ENCODE measurements at regions of chr11 and their contacts with region 1.

Region 1: DNA sequence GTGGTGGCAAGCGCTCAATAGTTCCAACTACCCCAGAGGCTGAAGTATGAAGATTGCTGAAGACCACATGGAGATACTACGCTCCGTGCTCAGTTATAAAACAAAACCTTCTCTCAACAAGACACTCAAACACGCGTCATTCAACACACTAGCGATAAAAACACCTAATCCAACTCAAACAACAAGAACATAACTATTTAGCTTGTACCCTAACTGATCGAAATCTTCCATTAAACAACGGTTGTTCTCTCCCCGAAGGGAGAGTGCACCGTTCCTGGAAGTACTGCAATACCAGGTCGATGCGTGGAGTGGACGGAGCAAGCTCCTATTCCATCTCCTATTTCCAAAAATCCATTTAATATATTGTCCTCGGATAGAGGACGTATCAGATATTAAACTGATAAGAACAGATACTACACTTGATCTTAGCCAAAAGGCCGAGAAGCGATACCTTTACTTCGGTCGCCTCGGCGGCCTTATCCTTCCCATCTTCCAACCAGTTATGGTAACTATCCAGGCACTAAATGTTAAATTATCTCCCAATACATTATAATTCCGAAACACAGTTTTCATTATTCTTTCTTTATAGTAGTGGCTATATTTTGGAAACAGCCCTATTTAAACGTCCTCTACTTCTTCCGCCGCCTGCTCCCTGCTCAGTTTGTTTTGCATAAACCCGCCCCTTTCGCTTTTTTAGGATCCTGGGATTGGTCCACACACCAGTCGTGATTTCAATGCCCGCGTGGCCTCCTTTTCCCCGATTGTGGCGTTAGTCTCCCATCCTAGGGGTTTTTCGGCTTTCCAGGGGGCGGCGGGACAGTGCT is 2.2 kb upstream of the WDR74 start:
- DNase-seq: peak; percentile 99
- ATAC-seq: peak; percentile 79
- H3K4me3 ChIP-seq: peak overlapping the region in 1 of 2 experiments; percentile 15; a peak in 2 of 4 replicates
- H3K27ac ChIP-seq: peak overlapping the region; percentile 94
- H3K4me1 ChIP-seq: peaks cover 8 to 36% of the 10 kb centered on the region in 2 experiments; a peak in 3 of 4 replicates
- H3K27me3 ChIP-seq: no peaks in the 10 kb centered on the region
- CTCF ChIP-seq: no peak
- POLR2A ChIP-seq: peak; percentile 100
- RAD21 ChIP-seq: no peak

Region 2: DNA sequence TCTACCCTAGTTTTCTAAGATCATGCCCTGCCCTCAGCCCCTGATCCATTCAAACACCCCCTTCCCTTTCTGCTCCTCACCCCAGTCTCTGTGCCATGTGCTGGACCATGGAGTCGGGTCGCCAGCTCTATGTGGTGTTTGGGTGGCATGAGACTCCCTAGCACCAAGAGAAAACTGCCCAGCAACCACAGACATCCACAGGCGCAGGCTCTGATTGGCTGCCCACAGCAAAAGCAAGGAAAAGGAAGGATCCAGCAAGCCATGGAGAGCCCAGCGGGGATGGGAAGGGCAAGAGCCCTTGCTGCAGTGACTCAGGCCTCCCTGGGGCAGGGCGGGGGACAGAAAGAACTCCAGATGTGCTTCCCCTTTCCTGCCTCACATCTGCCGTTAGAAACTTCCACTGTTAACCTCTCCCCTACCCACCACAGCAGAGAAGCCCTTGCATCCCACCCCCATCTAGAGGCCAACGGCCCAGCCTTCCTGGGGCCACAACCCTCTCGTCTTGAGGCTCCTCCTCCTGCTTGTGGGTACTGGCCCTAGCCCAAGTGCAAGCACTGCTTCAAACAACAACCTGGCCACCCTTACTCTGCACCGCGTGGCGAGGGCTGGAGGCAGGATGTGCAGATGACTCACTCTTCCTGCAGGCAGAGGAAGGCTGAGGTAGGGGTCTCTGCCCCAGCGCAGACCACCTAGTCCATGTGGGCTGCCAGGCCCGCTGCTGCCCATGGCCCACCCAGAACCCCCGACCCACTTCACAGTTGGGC is 285.3 kb before region 1 on chr11:
- CTCF ChIA-PET with region 1: no interaction called
- POLR2A ChIA-PET with region 1: interaction called, 6 read pairs
- RAD21 ChIA-PET with region 1: no interaction called
- intact Hi-C with region 1: loop called (anchors 5 kb)
- DNase-seq: peak; percentile 93
- ATAC-seq: peak; percentile 60
- H3K4me3 ChIP-seq: peak overlapping the region; percentile 33 to 36
- H3K27ac ChIP-seq: peak overlapping the region; percentile 99
- H3K4me1 ChIP-seq: peaks cover 90 to 100% of the 10 kb centered on the region in 2 experiments
- H3K27me3 ChIP-seq: no peaks in the 10 kb centered on the region
- CTCF ChIP-seq: no peak
- POLR2A ChIP-seq: peak; percentile 21
- RAD21 ChIP-seq: no peak

Region 3: GRCh38 chr11:62678770-62679696 is 162.5 kb before region 1 on chr11 and contains the start of gene UBXN1:
- CTCF ChIA-PET with region 1: no interaction called
- POLR2A ChIA-PET with region 1: interaction called, 13 read pairs
- RAD21 ChIA-PET with region 1: no interaction called
- intact Hi-C with region 1: no loop called
- DNase-seq: peak; percentile 64
- ATAC-seq: peak; percentile 73
- H3K4me3 ChIP-seq: peak within 1 kb of the TSS; percentile 80 to 87
- H3K27ac ChIP-seq: peak within 1 kb of the TSS; percentile 82
- H3K4me1 ChIP-seq: peaks cover 23 to 44% of the 10 kb centered on the region in 2 experiments
- H3K27me3 ChIP-seq: no peaks in the 10 kb centered on the region
- CTCF ChIP-seq: no peak
- POLR2A ChIP-seq: no peak
- RAD21 ChIP-seq: no peak
- total RNA-seq, gene UBXN1: 94.2 TPM

Region 4: GRCh38 chr11:62787005-62787759 is 54.4 kb before region 1 on chr11 and contains the start of gene TMEM179B:
- CTCF ChIA-PET with region 1: no interaction called
- POLR2A ChIA-PET with region 1: interaction called, 82 read pairs
- RAD21 ChIA-PET with region 1: no interaction called
- intact Hi-C with region 1: loop called (anchors 1 kb)
- DNase-seq: peak; percentile 98
- ATAC-seq: peak; percentile 71
- H3K4me3 ChIP-seq: peak within 1 kb of the TSS; percentile 62 to 80
- H3K27ac ChIP-seq: peak within 1 kb of the TSS; percentile 96
- H3K4me1 ChIP-seq: peaks cover 18 to 41% of the 10 kb centered on the region in 2 experiments; a peak in 3 of 4 replicates
- H3K27me3 ChIP-seq: no peaks in the 10 kb centered on the region
- CTCF ChIP-seq: peak in 2 of 3 experiments; percentile 41 to 73; a peak in 4 of 6 replicates
- POLR2A ChIP-seq: peak; percentile 90
- RAD21 ChIP-seq: no peak
- total RNA-seq, gene TMEM179B: 51.6 TPM

Region 5: GRCh38 chr11:62855571-62856332 is 14.2 kb after region 1 on chr11:
- CTCF ChIA-PET with region 1: no interaction called
- POLR2A ChIA-PET with region 1: interaction called, 343 read pairs
- RAD21 ChIA-PET with region 1: no interaction called
- intact Hi-C with region 1: no loop called
- DNase-seq: peak; percentile 96
- ATAC-seq: peak; percentile 80
- H3K4me3 ChIP-seq: peak overlapping the region; percentile 74 to 83
- H3K27ac ChIP-seq: peak overlapping the region; percentile 85
- H3K4me1 ChIP-seq: peaks cover 38 to 60% of the 10 kb centered on the region in 2 experiments
- H3K27me3 ChIP-seq: no peaks in the 10 kb centered on the region
- CTCF ChIP-seq: no peak
- POLR2A ChIP-seq: peak; percentile 100
- RAD21 ChIP-seq: no peak

Region 6: DNA sequence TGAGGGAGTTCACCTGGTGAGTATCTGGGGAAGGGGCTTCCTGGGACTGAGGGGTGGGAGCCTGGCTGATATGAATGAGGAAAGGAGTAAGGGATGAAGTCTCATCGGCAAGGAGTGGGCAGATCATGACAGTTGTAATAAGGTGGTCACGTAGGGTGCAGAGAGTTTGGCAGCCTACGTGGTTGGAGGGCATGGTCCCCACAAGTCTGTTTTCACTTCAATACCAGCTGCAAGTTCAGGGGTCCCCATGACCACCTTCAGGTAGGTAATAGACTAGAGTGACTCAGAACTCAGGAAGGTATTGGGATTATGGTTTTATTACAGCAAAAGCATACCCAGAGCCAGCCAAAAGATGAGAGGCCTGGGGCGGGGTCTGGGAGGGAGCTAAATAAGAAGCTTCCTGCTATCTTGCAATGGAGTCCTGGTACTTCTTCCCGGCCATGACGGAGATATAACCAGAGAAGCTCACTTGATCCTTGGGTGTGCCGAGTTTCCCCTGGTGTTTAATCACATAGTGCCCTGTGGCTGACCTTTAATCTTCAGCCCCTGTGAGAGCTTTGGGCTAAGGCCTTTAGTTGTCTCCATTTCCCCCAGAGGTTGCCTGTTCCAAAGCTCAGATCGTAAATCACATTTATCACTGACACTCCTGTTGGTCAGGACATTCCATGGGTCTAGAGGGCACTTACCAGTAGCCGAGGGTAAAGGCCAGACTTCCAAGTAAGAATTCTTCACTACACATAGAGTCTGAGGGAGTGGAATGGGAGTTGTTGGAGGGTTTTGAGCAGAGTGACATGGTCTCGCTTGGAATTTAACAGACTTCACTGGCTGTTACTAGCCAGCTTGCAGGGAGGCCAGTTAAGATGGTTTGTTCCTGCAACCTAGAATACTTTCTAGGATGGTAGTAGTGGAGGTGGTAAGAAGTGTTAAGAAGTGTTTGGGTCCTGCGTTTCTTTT is 48.2 kb after region 1 on chr11:
- CTCF ChIA-PET with region 1: no interaction called
- POLR2A ChIA-PET with region 1: interaction called, 14 read pairs
- RAD21 ChIA-PET with region 1: interaction called in 1 of 2 experiments, 4 read pairs
- intact Hi-C with region 1: no loop called
- DNase-seq: no peak
- ATAC-seq: peak; percentile 61
- H3K4me3 ChIP-seq: no peak overlapping the region
- H3K27ac ChIP-seq: peak overlapping the region; percentile 54
- H3K4me1 ChIP-seq: peaks cover 19 to 50% of the 10 kb centered on the region in 2 experiments; a peak in 3 of 4 replicates
- H3K27me3 ChIP-seq: no peaks in the 10 kb centered on the region
- CTCF ChIP-seq: no peak
- POLR2A ChIP-seq: no peak
- RAD21 ChIP-seq: no peak

Region 7: DNA sequence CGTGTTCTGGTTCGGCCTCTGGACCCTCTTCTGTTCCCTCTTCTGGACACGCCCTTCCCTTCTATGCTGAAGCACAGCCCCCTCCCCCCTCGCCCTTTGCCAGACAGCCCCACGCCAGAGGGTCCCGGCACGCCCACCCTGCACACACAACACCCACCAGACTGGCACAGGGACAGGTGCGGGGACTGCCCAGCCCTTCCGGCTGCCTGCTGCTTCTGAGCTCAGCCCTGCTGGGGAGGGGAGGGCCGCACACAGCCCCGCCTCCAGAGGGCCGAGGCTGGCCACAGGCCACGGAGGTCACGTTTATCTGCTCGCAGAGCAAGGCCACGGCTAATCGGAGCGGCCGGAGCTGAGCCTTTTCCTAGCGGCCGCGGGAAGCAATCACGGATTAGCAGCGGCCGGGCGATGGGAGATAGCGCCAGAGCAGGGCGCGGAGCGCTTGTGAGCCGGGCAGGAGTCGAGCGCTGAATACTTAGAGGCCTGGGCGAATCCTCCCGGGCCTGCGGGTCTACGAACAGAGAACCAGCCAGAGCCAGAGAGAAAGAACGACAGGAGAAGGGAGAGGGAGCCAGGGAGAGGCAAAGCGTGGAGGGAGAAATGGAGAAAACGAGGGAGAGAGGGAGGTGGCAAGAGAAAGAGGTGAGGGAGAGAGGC is 1166.2 kb after region 1 on chr11:
- CTCF ChIA-PET with region 1: no interaction called
- POLR2A ChIA-PET with region 1: no interaction called
- RAD21 ChIA-PET with region 1: no interaction called
- intact Hi-C with region 1: no loop called
- DNase-seq: peak; percentile 54
- ATAC-seq: peak; percentile 84
- H3K4me3 ChIP-seq: peak overlapping the region; percentile 43 to 58
- H3K27ac ChIP-seq: peak overlapping the region; percentile 77
- H3K4me1 ChIP-seq: peaks cover 18 to 37% of the 10 kb centered on the region in 2 experiments
- H3K27me3 ChIP-seq: no peaks in the 10 kb centered on the region
- CTCF ChIP-seq: peak in 2 of 3 experiments; percentile 2 to 27; a peak in 1 of 6 replicates
- POLR2A ChIP-seq: no peak
- RAD21 ChIP-seq: no peak

Measured in HCT116 (cell line).